ENCODE measurements at regions of chr7 and their contacts with region 1.

Region 1: DNA sequence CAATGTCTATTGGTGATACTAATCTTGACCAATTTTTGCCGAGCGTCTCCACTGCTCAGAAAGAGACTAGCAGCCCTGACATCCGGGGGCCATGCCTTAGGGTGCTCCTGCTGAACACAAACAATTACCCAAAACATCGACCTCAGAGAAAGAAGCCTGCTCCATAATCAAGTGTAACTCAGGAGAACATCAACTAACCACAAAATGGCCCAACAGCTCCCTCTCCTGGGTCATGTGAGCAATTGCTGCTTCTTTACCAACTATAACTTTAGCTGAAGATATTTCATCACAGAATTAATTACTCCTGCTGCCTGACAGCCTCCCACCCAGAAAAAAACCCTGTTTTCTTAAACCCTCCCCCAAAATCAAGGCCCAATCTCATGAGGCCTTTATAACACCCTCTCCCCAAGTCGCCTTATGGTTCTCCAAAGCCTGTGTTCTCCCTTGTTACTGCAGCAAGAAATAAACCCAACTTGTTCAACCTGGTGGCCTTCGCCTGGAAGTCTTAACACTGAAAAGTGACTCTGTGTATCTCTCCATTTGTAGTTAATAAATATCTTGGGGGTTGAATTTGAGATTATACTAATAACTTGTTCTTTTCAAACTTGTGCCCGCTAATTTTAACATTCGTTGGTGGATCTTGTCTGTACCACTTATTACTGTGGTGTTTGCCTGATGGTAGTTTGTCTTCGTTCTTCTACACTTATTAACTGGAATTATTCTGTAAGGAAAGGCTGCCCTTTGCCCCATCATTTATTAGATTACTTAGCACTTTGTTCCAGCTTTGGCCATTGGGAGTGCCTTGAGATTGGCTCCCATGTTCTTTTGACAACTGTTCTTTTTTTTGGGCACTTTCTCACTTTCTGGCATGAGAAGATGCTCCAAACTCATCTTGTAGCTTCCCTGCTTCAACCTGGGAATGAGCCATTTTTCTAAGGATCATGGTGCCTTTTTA is 21.2 kb upstream of the RAMP3 start:
- DNase-seq: peak; percentile 81
- H3K4me3 Mint-ChIP-seq: no peak overlapping the region
- H3K27ac Mint-ChIP-seq: peak overlapping the region; percentile 46
- H3K4me1 Mint-ChIP-seq: peaks cover 36% of the 10 kb centered on the region
- H3K27me3 Mint-ChIP-seq: peaks cover 3% of the 10 kb centered on the region

Region 2: DNA sequence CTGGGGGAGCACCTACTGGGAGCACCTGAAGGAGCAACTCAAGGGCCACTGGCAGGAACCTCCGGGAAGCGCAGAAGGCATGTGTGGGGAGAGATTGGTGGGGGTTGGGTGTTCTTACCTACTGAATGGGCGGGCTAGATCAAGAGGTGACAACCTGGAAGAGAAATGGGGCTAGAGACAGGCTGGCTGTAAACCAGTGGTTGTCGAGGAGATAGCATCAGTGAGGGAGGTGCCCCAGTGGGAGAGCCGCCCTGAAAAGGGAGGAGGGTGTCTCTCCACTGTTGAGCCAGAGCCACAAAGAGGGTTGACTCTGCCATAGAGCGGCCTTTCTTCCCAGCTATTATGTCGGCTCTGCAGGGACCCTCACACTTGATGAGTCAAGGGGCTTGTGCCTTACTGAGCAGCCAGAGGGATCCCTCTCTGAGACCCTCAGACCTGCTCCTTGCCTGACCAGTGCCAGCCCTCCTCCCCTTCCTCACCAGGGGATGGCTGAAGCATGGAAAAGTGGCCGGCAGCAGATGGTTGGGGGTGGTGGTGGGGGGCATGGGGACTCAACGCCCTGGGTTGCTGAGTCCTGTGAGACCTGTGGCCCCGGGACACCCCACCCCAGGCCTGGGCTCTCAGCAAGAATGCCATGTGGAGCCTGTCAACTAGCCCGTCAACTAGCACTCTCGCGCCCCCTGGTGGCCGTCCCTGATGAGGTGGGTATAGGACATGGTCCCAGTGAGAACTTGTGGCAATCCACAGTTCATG is 214.6 kb before region 1 on chr7:
- CTCF ChIA-PET with region 1: interaction called, 11 read pairs
- POLR2A ChIA-PET with region 1: no interaction called
- DNase-seq: peak; percentile 95
- H3K4me3 Mint-ChIP-seq: no peak overlapping the region
- H3K27ac Mint-ChIP-seq: no peak overlapping the region
- H3K4me1 Mint-ChIP-seq: peaks cover 14% of the 10 kb centered on the region
- H3K27me3 Mint-ChIP-seq: peaks cover 6% of the 10 kb centered on the region

Region 3: GRCh38 chr7:44980393-44981034 is 155.9 kb before region 1 on chr7:
- CTCF ChIA-PET with region 1: interaction called, 15 read pairs
- POLR2A ChIA-PET with region 1: interaction called, 56 read pairs
- DNase-seq: peak; percentile 75
- H3K4me3 Mint-ChIP-seq: peak overlapping the region; percentile 99
- H3K27ac Mint-ChIP-seq: peak overlapping the region; percentile 96
- H3K4me1 Mint-ChIP-seq: peaks cover 76% of the 10 kb centered on the region
- H3K27me3 Mint-ChIP-seq: no peaks in the 10 kb centered on the region

Region 4: DNA sequence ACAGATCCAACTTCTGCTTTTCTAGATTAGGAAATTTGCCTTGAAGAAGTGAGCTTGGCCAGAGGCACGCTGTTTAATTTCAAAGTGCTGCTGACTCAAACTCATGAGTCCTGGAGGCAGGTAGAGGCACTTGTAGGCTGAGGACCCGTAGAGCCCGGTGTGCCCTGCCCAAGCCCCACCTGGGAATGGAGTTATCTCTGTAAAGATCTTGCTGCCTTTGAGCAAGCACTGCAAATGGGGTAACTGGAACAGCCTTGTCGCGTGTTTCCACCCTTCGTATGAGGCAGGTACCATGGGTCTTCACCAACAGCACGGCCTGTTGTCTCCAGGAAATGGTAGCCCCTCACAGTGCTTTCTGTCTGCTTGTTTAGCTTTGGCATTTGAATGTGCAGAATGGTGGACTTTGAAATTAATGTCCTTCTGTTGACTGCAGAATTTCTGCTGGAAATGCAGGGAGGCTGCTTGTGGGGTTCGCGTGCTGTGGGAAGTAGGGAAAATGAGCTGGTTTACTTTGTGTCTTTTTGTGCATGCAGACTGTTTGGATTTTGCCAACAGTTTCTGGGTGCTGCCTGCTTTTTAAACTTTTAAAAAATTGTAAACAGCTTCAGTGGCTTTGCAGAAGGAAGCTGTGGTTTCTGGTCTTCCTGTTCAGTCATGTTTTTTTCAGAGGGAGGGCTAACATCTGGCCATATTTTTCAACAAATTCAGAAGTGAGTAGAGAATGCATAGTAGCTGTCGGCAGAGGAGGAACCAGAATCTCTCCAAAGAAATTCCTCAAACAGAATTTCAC is 109.2 kb before region 1 on chr7:
- CTCF ChIA-PET with region 1: interaction called, 7 read pairs
- POLR2A ChIA-PET with region 1: interaction called, 10 read pairs
- DNase-seq: peak; percentile 46
- H3K4me3 Mint-ChIP-seq: peak overlapping the region; percentile 83
- H3K27ac Mint-ChIP-seq: peak overlapping the region; percentile 81
- H3K4me1 Mint-ChIP-seq: peaks cover 64% of the 10 kb centered on the region
- H3K27me3 Mint-ChIP-seq: no peaks in the 10 kb centered on the region

Region 5: GRCh38 chr7:45089341-45089891 is 47.0 kb before region 1 on chr7:
- CTCF ChIA-PET with region 1: interaction called, 10 read pairs
- POLR2A ChIA-PET with region 1: interaction called, 4 read pairs
- DNase-seq: peak; percentile 72
- H3K4me3 Mint-ChIP-seq: peak overlapping the region; percentile 47
- H3K27ac Mint-ChIP-seq: no peak overlapping the region
- H3K4me1 Mint-ChIP-seq: peaks cover 8% of the 10 kb centered on the region
- H3K27me3 Mint-ChIP-seq: peaks cover 38% of the 10 kb centered on the region

Region 6: DNA sequence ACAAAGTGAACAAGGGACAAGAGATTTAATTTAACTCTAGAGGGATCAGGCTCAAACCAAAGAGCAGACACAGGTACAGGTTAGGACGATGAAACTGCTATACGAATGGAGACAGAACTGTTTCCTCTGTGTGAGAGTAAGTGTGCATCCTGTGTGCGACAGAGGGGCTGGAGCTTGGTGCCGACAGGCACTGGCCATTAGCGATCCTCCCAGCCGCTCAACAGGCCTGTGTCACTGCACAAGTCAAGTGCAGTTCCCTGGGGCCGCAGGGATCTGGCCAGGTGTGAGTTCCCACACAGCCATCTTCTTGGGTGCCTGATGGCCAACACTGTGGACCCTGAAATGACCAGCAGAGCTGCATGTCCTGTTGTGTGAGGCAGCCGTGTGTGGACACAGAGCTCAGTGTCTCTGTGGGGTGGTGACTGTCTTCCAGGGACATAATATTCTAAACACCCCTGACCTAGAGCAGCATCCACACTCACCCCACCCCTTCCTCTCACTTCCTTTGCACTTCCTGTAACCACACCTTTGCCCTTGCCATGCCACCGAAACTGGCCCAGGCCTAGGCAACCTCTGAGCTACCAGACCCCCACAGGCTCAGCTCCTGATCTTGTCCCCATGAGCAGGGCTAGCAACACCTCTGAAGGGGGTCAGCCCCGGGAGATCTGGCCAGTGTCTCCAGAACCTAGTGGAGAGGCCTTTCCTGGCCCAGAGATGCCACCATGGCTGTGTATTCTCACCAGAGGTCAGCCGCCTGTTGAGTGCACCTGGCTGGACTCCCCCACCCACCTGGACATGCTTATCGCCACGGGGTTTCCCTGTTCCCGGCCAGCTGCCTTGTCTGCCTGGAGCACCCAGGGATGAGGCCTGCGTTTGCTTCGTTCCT is 13.2 kb before region 1 on chr7:
- CTCF ChIA-PET with region 1: interaction called, 37 read pairs
- POLR2A ChIA-PET with region 1: interaction called, 15 read pairs
- DNase-seq: peak; percentile 49
- H3K4me3 Mint-ChIP-seq: peak overlapping the region; percentile 55
- H3K27ac Mint-ChIP-seq: peak overlapping the region; percentile 93
- H3K4me1 Mint-ChIP-seq: peaks cover 31% of the 10 kb centered on the region
- H3K27me3 Mint-ChIP-seq: no peaks in the 10 kb centered on the region

Measured in activated CD4-positive, alpha-beta memory T cell treated with anti-CD3 and anti-CD28 coated beads, Interleukin-2, amount 10 ng/mL, durations not matched to agents 7 days and 5 days (primary cell).